ENCODE measurements at regions of chr2 and their contacts with region 1.

Region 1: GRCh38 chr2:53227535-53227934 is 540.1 kb upstream of the CHAC2 start:
- DNase-seq: no peak
- H3K4me3 ChIP-seq: no peak overlapping the region
- H3K27ac ChIP-seq: no peak overlapping the region
- H3K4me1 ChIP-seq: no peaks in the 10 kb centered on the region
- H3K27me3 ChIP-seq: no peaks in the 10 kb centered on the region
- CTCF ChIP-seq: no peak
- EP300 ChIP-seq: no peak
- POLR2A ChIP-seq: no peak

Region 2: GRCh38 chr2:53217250-53217649 is 10.3 kb before region 1 on chr2:
- intact Hi-C with region 1: loop called in 1 of 4 experiments (anchors 1 kb)
- DNase-seq: no peak
- H3K4me3 ChIP-seq: no peak overlapping the region
- H3K27ac ChIP-seq: no peak overlapping the region
- H3K4me1 ChIP-seq: no peaks in the 10 kb centered on the region
- H3K27me3 ChIP-seq: no peaks in the 10 kb centered on the region
- CTCF ChIP-seq: no peak
- EP300 ChIP-seq: no peak
- POLR2A ChIP-seq: no peak